ENCODE measurements at regions of chr6 and their contacts with region 1.

Region 1: DNA sequence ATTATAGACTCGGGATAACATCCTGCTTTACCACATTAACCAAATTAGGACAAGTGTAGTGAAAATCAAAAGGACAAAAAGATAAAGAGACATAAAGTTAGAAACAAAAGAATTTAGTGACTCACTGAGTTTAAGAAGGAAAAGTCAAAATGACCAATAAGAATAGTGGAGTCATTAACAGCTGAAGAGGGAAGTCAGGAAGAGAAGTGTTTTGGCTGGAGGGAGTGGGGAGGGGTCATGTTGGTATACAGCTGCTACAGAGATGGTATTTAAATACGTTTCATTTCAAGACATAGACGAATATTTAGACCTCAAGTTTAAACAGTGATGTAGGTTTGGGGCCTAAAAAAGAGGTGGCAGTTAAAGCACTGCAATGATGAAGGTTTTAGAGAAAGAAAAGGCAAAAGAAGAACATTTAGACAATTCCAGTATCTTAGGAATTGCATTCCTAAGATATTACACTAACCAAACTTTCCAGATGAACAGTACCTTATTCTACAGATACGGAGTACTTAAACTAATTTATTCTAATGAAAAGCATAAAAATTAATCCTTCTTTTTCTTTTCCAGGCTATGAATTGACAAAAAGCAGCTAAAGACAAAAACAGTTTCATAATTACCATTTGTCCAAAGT is 10.6 kb downstream of the FKBP5 start:
- DNase-seq: no peak
- H3K4me3 ChIP-seq: no peak overlapping the region
- H3K4me3 Mint-ChIP-seq: peak overlapping the region; percentile 22 to 75 (median 43)
- H3K27ac ChIP-seq: no peak overlapping the region
- H3K27ac Mint-ChIP-seq: peak overlapping the region; percentile 39 to 91 (median 81)
- H3K4me1 ChIP-seq: peaks cover 95% of the 10 kb centered on the region
- H3K4me1 Mint-ChIP-seq: peaks cover 67 to 93% (median 79%) of the 10 kb centered on the region in 4 donors
- H3K27me3 ChIP-seq: no peaks in the 10 kb centered on the region
- H3K27me3 Mint-ChIP-seq: no peaks in the 10 kb centered on the region

Region 2: GRCh38 chr6:33967966-33968724 is 1710.0 kb before region 1 on chr6:
- CTCF ChIA-PET with region 1: no interaction called
- POLR2A ChIA-PET with region 1: no interaction called
- intact Hi-C with region 1: no loop called
- DNase-seq: no peak
- H3K4me3 ChIP-seq: no peak overlapping the region
- H3K4me3 Mint-ChIP-seq: no peak overlapping the region
- H3K27ac ChIP-seq: no peak overlapping the region
- H3K27ac Mint-ChIP-seq: peak overlapping the region in 1 of 7 donors; percentile 25
- H3K4me1 ChIP-seq: no peaks in the 10 kb centered on the region
- H3K4me1 Mint-ChIP-seq: no peaks in the 10 kb centered on the region
- H3K27me3 ChIP-seq: no peaks in the 10 kb centered on the region
- H3K27me3 Mint-ChIP-seq: peaks cover 16 to 26% of the 10 kb centered on the region in 2 donors

Region 3: DNA sequence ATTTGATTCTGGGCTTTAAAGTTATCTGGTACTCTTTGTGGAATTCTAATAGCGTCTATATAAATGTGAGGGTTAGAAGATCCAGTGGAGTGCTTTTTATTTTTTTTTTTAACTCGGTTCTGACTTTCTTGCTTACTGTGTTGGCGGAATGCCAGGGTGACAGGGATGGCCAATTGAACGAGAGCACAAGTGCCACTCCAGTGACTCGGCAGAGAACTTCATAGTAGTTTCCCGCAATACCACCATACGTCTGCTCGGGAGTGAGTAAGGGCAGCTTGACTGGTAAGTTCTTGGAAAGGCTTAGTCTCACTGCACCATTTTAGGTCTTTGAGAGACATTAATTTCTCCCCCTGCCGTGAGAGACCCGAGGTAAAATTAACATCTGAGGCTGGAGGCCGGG is 116.1 kb before region 1 on chr6:
- CTCF ChIA-PET with region 1: no interaction called
- POLR2A ChIA-PET with region 1: no interaction called
- intact Hi-C with region 1: no loop called
- DNase-seq: no peak
- H3K4me3 ChIP-seq: no peak overlapping the region
- H3K4me3 Mint-ChIP-seq: no peak overlapping the region
- H3K27ac ChIP-seq: no peak overlapping the region
- H3K27ac Mint-ChIP-seq: no peak overlapping the region
- H3K4me1 ChIP-seq: no peaks in the 10 kb centered on the region
- H3K4me1 Mint-ChIP-seq: peaks cover 0 to 8% (median 2%) of the 10 kb centered on the region in 4 donors
- H3K27me3 ChIP-seq: no peaks in the 10 kb centered on the region
- H3K27me3 Mint-ChIP-seq: peaks cover 3 to 4% of the 10 kb centered on the region in 2 donors

Region 4: GRCh38 chr6:35663447-35664235 is 14.5 kb before region 1 on chr6:
- CTCF ChIA-PET with region 1: interaction called, 11 read pairs
- POLR2A ChIA-PET with region 1: interaction called, 56 read pairs
- intact Hi-C with region 1: loop called (anchors 2 kb)
- DNase-seq: no peak
- H3K4me3 ChIP-seq: peak overlapping the region in 1 of 2 donors; percentile 6
- H3K4me3 Mint-ChIP-seq: no peak overlapping the region
- H3K27ac ChIP-seq: peak overlapping the region; percentile 50
- H3K27ac Mint-ChIP-seq: no peak overlapping the region
- H3K4me1 ChIP-seq: peaks cover 66% of the 10 kb centered on the region
- H3K4me1 Mint-ChIP-seq: peaks cover 12 to 20% (median 17%) of the 10 kb centered on the region in 4 donors
- H3K27me3 ChIP-seq: no peaks in the 10 kb centered on the region
- H3K27me3 Mint-ChIP-seq: no peaks in the 10 kb centered on the region